ENCODE measurements at regions of chr14 and their contacts with region 1.

Region 1: GRCh38 chr14:27660683-27661082 is 1062.8 kb upstream of the NOVA1 start:
- DNase-seq: no peak
- H3K4me3 ChIP-seq: no peak overlapping the region
- H3K27ac ChIP-seq: no peak overlapping the region
- H3K4me1 ChIP-seq: no peaks in the 10 kb centered on the region
- H3K27me3 ChIP-seq: no peaks in the 10 kb centered on the region
- CTCF ChIP-seq: no peak
- EP300 ChIP-seq: no peak
- POLR2A ChIP-seq: no peak

Region 2: DNA sequence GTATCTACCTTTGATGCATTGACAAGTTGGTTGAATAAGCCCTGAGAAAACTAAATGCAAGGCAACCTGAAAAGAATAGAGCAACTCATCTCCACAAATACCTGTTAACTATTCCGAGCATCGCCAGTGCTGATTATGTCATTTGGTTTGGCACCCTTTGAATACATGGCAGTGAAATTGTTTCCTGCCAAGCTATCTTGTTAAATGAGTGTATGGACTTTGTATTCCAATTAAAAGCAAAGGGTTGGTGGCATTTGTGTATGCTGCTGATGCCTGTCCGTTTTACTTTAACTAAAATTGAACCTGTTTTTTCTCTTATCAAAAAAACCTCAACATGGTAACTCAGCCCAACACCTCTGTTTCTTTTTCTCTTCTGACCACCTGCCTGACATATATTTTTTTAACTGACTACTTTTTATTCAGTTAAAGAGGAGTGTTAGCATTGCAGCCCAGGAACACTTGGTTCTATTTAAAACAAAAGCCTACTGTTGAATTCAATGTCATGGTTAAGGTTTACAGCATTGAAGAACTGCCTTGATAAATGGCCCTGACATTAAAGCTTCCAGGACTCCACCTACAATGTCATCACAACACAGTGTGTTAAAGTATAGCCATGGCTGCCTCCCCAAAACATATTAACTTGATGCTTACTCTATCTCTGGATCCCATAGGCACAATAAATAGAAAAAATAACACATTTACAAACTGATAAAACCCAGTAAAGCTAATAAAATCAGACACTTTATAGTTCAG is 224.6 kb before region 1 on chr14:
- in situ Hi-C with region 1: no loop called
- intact Hi-C with region 1: loop called (anchors 5 kb)
- DNase-seq: no peak
- H3K4me3 ChIP-seq: no peak overlapping the region
- H3K27ac ChIP-seq: peak overlapping the region in 3 of 4 donors; percentile 3 to 47 (median 29)
- H3K4me1 ChIP-seq: peaks cover 0 to 27% (median 3%) of the 10 kb centered on the region in 4 donors
- H3K27me3 ChIP-seq: no peaks in the 10 kb centered on the region
- CTCF ChIP-seq: no peak
- EP300 ChIP-seq: no peak
- POLR2A ChIP-seq: no peak

Measured in transverse colon (tissue), 4 donors.